ENCODE measurements at regions of chr12 and their contacts with region 1.

Region 1: DNA sequence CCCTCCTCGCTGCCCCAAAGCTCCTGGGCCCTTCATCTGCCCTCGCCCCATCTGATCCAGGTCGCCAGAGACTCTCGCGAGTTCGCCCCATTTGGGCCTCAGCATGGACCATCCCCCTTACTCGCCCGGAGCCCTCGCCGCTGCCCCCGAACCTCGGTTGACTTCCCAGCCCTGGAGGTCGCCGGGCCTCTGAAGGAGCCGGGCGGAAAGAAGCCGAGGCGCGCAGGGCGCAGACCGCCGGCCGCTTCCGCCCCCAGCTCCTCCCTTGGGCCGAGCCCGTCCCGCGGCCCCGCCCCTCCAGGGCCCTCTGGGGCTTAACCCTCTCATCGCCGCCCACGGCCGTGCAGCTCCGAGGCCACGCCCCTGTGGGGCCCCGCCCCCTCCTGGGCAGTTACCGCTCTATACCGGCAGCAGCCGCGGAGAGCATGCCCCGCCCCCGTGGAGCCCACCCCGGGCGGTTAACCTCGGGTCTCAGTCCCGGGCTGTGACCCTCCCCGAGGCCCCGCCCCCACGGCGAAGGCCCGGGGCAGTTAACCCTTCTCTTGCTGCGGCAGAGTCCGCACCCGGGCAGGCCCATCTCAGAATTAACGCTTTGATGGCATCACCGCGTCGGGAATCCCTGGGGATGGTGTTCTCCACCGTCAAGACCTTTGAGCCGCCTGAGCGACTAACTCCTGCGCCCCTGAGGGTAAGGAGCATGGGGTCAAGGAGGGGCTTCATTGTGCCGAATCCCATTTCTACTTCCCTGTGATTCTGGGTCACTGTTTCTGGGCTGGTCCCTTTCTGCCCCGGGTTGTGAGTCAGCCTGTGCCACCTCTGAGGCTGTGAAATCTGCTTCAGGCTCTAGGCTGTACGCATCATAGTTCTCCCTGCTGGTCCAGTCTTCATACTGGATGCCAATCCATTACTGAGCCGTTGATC is at the start of gene SPSB2:
- DNase-seq: peak; percentile 94
- ATAC-seq: peak; percentile 68
- H3K4me3 ChIP-seq: peak within 1 kb of the TSS; percentile 78
- H3K27ac ChIP-seq: peak within 1 kb of the TSS; percentile 28; the same call in 1 of the 2 replicates
- H3K4me1 ChIP-seq: peaks cover 31% of the 10 kb centered on the region
- H3K27me3 ChIP-seq: no peaks in the 10 kb centered on the region
- CTCF ChIP-seq: no peak
- total RNA-seq, gene SPSB2: 8.4 and 9.2 TPM in 2 replicates

Region 2: GRCh38 chr12:6890789-6891645 is 17.7 kb after region 1 on chr12:
- CTCF ChIA-PET with region 1: interaction called, 16 read pairs
- POLR2A ChIA-PET with region 1: interaction called, 10 read pairs
- intact Hi-C with region 1: loop called (anchors 1 kb)
- DNase-seq: peak; percentile 93
- ATAC-seq: peak; percentile 98
- H3K4me3 ChIP-seq: peak overlapping the region; percentile 65
- H3K27ac ChIP-seq: peak overlapping the region; percentile 91
- H3K4me1 ChIP-seq: peaks cover 11% of the 10 kb centered on the region
- H3K27me3 ChIP-seq: no peaks in the 10 kb centered on the region
- CTCF ChIP-seq: peak; percentile 60

Region 3: DNA sequence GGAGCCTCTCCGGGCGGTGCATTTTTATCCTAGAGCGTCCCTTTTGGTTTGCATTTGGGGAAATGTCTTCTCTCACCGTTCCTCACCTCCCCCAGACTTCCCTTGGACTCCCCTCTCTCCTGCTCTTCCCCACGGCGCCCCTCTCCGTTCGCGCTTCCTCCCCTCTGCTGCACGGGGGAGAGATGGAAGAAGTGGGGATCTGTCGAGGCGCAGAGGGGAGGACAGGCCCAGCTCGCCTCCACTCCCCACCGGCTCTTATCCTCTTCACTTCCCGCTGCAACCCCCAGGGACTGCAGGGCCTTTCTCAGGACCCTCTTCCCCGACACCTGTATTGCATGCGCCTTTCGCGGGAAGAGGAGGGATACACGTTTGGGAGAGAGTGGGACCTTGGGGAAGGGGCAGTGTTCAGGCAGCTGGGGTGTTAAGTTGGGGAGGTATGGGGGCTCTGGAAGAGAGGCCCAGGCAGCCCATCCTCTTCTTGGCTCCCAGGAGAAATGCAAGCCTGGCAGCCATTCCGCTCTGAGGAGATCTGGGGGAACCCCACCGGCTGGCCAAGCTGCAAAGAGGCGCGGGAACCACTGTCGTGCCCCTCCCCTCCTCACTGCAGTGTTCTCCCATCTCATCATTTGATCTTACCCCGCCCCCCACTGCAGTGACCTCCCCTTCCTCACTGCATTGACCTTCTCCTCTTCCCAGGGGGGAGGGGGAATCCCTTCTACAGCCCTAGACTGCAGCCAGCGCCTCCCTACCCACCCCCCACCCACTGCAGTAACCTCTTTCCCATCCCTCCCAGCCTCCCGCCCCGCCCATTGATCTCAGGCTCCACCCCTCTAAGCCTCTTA is 41.8 kb after region 1 on chr12:
- CTCF ChIA-PET with region 1: no interaction called
- POLR2A ChIA-PET with region 1: no interaction called
- intact Hi-C with region 1: no loop called
- DNase-seq: no peak
- ATAC-seq: peak; percentile 3; the same call in 1 of the 2 replicates
- H3K4me3 ChIP-seq: peak overlapping the region; percentile 75
- H3K27ac ChIP-seq: no peak overlapping the region
- H3K4me1 ChIP-seq: 0 out of 2 replicates have a peak, but pooled peaks cover 4% of the 10 kb centered on the region
- H3K27me3 ChIP-seq: no peaks in the 10 kb centered on the region
- CTCF ChIP-seq: no peak

Measured in PC-3 (cell line).